AG04449 (cell line): ENCODE measurements at regions of chr12 and their contacts with region 1.

Region 1: DNA sequence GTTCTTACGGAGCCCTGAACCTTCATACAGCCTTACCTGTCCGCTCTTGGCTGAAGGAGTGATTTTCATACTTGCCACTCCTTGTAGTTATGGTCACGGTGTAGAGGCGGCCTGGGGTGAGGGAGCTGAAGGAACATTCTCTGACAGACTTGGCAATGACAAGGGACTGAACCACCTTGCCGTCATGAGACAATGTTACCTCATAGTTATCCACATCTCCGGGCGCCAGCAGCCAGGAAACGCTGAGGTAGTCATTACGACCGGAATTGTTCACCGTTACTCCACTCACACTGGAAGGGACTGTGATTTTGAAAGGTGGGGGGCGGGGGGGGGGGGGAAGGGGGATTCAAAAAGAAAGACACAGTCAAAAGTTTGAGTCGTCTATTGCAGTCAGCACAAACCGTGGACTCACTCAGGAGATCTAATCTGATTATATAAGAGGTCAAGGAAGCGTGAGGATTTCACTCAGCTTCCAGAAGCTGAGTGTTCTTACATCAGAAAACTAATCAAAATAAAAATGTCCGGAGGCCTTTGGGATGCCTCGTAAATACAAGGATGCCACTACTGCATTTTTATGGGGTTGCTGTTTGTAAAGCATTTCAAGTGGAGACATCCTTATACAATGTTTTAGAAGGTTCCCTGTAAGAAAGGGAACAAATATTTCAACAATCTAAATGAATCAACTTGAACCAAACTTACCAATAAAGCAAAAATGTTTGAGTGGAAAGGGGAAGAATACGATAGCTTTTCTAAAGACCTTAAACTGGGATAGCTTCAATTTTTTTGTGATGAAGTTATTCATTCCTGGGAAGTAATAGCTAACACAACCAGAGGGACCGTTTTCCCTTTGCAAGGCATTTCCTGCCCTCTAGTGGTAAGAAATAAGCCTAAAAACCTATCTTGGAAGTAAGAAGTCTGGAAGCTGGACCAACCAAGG is 60.6 kb downstream of the PTPRB start:
- DNase-seq: peak; percentile 71
- H3K4me3 ChIP-seq: no peak overlapping the region
- CTCF ChIP-seq: peak; percentile 66

Region 2: GRCh38 chr12:69873429-69873828 is 703.2 kb before region 1 on chr12:
- CTCF ChIA-PET with region 1: interaction called, 129 read pairs
- POLR2A ChIA-PET with region 1: no interaction called
- DNase-seq: no peak
- H3K4me3 ChIP-seq: no peak overlapping the region
- CTCF ChIP-seq: no peak

Region 3: DNA sequence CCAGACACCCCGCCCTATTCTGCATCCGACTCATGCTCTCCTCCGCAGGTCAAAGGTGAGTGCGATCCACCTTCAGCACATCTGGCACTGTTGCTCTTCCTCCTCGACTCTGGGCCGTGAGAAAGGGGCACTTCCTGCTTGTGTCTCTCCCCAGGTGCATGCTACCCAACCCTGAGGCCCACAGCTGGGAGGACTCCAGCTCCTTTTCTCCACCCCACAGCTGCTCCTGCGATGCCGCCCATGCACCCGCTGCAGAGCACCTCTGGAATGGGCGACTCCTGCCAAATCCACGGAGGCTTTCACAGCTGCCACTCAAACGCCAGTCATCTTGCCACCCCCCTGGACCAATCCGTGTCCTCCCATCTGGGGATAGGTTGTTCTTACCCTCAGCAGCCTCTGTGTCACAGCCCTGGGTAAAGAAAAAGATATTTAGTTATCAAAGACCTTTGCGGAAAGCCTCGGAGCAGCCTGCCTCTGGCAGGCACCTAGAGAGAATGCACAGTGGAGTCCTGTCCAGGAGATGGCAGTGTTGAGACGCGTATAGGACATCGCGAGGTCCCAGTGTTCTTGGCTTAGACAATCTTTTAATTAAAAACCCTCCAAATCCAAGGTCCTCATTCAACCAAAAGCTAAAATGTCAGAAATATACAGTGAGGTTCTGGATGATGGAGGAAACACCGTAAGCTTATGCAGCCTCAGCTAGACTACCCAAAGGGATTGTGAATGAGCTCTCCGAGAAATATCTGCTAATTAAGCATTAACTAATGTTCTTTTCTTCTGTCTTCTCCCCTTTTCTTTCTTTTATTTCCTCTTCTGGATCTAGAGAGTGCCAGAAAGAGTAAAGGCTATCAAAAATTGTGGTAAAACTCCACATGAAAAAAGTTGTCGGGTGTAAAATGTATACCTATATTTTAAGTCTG is 697.3 kb before region 1 on chr12:
- CTCF ChIA-PET with region 1: interaction called, 129 read pairs
- POLR2A ChIA-PET with region 1: no interaction called
- DNase-seq: no peak
- H3K4me3 ChIP-seq: peak overlapping the region; percentile 42
- CTCF ChIP-seq: peak; percentile 80

Region 4: DNA sequence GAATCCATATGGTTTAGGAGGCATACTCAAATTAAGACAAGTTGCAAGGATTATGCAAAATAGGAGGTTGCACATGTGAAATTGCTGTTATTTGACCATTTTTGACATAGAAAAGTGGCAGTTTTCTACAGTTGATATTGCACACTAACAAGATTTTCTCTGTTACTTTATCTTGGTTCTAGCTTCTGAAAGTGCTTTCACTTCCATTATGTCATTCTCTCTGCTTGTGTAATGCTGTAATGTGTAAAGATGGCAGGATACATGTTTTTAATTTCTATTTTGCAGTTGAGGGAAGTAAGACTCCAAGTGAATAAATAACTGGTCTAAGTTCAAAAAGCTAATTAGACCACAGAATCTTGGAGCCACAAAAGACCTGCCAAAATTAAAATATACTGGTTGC is 691.0 kb before region 1 on chr12:
- CTCF ChIA-PET with region 1: interaction called, 129 read pairs
- POLR2A ChIA-PET with region 1: no interaction called
- DNase-seq: no peak
- H3K4me3 ChIP-seq: no peak overlapping the region
- CTCF ChIP-seq: no peak

Region 5: GRCh38 chr12:70560671-70561070 is 15.9 kb before region 1 on chr12:
- CTCF ChIA-PET with region 1: interaction called, 11 read pairs
- POLR2A ChIA-PET with region 1: no interaction called
- DNase-seq: no peak
- H3K4me3 ChIP-seq: no peak overlapping the region
- CTCF ChIP-seq: no peak

Region 6: DNA sequence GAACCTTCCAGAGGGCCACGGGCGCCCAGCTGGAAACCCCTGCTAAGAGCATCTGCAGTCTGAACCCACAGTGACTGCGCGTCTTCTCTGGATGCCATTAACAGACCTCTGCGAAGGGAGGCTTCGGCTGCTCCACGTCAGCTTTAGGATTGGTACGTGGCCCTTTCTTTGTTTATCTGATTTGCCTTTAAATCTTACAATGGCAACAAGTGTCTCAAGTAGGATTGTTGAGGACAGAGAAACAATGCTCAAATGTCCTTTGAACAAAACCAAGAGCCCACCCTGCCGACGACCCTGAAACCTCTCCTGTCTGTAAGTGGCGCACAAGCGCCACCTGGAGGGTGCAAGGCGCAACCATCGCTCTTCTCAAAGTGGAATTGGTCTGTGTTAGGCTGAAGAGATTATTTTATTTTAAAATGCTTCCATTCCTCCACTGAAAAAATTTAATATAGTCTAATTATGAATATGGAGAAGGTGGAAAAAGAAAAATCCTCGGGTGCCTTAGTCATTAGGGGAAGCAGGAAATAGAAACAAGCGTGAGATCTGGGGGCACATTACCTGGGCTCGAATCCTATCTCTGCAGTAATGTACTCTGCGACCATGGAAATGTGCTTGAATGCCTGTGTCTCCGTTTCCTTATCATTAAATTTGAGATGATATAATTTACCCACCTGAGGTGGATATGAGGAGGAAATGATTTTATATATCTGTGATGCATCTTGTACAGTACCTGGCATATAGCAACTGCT is 143.2 kb after region 1 on chr12:
- CTCF ChIA-PET with region 1: interaction called, 20 read pairs
- POLR2A ChIA-PET with region 1: no interaction called
- DNase-seq: peak; percentile 7
- H3K4me3 ChIP-seq: peak overlapping the region; percentile 58
- CTCF ChIP-seq: peak; percentile 85

Region 7: DNA sequence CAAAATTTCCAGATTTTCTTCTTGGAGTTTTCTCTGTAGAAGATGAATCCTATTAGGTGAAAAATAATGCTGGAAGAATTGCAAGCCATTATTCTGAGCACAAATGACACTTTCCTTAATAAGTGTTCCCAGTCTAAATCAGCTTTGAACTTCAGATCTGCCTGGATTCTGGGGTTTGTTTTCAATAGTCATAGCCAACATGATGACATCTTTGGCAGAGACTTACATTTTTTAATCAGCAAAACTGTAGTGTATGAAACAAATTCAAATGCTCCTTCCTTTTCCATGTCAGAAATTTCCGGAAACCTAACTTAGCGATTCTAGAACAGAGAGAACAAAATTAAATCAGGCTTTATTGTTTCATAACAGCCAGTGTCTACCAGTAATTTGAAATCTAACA is 492.7 kb after region 1 on chr12:
- CTCF ChIA-PET with region 1: no interaction called
- POLR2A ChIA-PET with region 1: no interaction called
- DNase-seq: no peak
- H3K4me3 ChIP-seq: no peak overlapping the region
- CTCF ChIP-seq: no peak